Posterior cingulate gyrus (tissue), 11 donors: ENCODE measurements at regions of chr2 and their contacts with region 1.

Region 1: DNA sequence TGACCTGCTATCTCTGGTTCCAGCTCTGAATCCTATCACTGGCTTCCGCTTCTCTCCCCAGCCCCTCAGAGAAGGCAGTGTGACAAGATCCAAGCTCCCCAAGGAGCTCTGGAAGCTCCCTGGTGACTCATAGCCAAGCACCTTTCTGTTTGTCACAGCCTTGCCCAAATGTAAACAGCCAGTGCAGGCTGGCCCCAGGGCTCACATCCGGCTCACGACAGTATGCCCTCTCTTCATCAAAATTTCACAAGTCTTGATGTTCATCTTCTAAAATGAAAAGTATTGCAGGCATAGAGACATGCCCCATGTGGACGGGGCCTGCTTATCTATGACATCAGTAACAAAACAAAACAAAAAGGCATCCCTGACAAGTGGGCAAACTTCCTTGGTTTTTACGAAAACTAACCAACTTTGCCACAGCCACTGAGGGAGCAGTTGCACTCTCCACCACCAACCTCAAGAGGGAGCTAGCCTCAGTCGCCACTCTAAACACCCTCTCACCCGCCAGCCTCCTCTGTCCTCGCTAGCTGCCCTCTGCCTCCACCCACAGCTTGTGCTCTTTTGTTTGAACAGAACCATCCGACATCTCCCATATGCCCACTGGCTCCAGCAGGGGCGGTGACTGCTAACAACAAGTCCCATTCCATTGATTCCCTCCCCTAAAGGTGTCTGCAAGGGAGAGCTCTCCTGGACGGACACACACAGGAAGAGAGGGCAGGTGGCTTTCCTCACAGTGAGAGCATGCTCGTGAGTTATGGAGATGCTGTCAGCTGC is 71.0 kb upstream of the DAPL1 start:
- DNase-seq: peak in 6 of 10 donors; percentile 23 to 92 (median 70)

Region 2: DNA sequence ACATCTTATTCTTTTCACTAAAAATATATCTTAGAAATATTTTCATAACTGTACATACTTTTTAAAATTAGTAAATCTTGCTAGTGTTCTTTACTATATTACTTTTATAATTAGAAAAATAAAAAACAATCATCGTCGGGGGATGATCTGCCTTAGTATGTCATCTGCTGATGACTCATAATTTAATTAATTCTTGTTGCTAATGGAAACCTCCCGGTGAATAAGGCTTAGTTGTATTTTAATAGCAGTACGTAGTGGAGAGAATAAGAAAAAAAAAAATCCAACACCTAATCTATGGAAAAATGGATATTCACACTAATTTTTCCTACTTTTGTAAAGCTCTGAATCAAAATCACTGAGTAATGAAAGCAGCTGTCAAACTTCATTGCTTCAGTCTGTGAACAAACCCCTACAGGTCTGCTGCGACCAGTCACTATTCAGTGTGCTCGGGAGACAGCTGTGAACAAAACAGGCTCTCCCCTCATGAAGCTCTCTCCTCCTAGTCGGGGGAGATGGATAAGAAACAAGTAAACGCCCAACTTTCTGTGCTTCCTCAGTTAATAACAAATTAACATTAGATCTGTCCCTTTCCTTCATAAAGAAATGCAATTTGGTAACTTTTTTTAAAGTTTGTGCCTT is 719.9 kb before region 1 on chr2:
- intact Hi-C with region 1: no loop called
- DNase-seq: no peak

Region 3: DNA sequence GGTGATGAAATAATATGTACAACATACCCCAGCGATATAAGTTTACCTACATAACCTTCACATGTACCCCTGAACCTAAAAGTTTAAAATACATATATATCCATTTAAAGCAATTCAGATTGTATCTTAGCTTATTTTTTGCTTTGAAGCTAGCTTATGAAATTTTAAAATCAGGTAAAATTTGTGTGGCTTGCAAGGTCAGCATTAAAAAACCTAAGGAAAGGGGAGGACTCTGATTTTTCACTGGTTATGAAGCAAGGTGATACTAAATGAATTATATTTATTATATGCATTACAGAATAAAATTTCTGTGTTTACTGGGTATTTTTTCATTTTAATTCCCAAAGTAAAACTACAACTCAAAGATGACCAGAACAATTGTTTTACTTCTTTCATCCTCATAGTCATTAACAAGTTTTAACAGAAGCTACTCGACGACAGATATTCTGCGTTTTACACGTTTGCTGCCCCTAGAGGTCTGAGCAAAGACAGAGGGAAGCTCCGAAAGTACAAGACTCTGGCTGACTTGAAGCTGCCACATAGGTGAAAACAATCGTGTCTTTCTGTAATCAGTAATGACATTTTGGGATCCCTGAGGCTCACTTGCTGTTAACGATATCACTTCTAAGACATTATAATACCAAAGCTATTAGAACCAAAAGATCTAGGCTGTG is 250.2 kb before region 1 on chr2:
- intact Hi-C with region 1: no loop called
- DNase-seq: no peak

Region 4: GRCh38 chr2:158686210-158686691 is 37.9 kb before region 1 on chr2:
- intact Hi-C with region 1: loop called (anchors 5 kb)
- DNase-seq: peak; percentile 43 to 95 (median 65)

Region 5: DNA sequence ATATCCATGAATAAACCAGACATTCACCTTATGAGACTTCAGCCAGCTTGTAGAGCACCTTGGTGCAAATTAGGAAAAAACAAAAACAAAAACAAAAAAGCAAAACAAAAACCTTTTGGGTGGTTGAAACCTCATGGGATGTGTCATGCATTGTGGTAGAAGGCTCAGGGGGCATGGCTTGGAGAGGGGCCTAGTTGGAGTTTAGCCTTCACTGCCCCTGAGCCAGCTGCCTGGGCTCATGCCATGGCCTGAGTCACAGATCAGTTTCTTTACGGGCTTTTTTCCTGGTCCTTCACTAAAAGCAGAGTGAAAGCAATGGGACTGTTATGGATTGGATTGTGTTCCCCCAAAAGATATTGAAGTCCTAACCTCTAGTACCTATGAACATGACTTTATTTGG is 49.0 kb after region 1 on chr2:
- intact Hi-C with region 1: loop called (anchors 2 kb)
- DNase-seq: peak in 3 of 10 donors; percentile 28 to 84 (median 53)